ENCODE measurements at regions of chr17 and their contacts with region 1.

Region 1: DNA sequence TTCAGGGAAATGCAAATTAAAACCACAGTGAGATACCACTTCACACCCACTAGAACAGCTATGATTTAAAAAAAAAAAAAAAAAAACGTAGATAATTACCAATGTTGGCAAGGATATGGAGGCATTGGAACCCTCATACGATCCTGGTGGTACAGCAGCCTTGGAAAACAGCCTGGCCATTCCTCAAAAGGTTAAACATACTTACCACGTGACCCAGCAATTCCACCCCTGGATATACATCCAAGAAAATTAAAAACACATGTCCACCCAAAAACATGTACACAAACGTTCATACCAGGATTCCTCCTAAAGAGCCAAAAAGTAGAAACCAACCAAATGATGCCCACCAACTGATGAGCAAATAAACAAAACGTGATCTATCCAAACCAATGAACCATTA is 68.1 kb downstream of the GAS7 start:
- DNase-seq: no peak
- H3K4me3 ChIP-seq: no peak overlapping the region
- H3K27ac ChIP-seq: no peak overlapping the region
- H3K4me1 ChIP-seq: peaks cover 15% of the 10 kb centered on the region
- H3K27me3 ChIP-seq: no peaks in the 10 kb centered on the region
- CTCF ChIP-seq: no peak
- EP300 ChIP-seq: no peak
- POLR2A ChIP-seq: no peak

Region 2: GRCh38 chr17:9937241-9937761 is 193.0 kb before region 1 on chr17:
- intact Hi-C with region 1: loop called in 1 of 4 experiments (anchors 5 kb)
- DNase-seq: peak in 4 of 5 donors; percentile 50 to 82 (median 62)
- H3K4me3 ChIP-seq: no peak overlapping the region
- H3K27ac ChIP-seq: no peak overlapping the region
- H3K4me1 ChIP-seq: peaks cover 4% of the 10 kb centered on the region
- H3K27me3 ChIP-seq: no peaks in the 10 kb centered on the region
- CTCF ChIP-seq: no peak
- EP300 ChIP-seq: no peak
- POLR2A ChIP-seq: no peak

Region 3: GRCh38 chr17:10050597-10051101 is 79.6 kb before region 1 on chr17:
- intact Hi-C with region 1: no loop called
- DNase-seq: no peak
- H3K4me3 ChIP-seq: no peak overlapping the region
- H3K27ac ChIP-seq: no peak overlapping the region
- H3K4me1 ChIP-seq: no peaks in the 10 kb centered on the region
- H3K27me3 ChIP-seq: no peaks in the 10 kb centered on the region
- CTCF ChIP-seq: no peak
- EP300 ChIP-seq: no peak
- POLR2A ChIP-seq: no peak

Region 4: DNA sequence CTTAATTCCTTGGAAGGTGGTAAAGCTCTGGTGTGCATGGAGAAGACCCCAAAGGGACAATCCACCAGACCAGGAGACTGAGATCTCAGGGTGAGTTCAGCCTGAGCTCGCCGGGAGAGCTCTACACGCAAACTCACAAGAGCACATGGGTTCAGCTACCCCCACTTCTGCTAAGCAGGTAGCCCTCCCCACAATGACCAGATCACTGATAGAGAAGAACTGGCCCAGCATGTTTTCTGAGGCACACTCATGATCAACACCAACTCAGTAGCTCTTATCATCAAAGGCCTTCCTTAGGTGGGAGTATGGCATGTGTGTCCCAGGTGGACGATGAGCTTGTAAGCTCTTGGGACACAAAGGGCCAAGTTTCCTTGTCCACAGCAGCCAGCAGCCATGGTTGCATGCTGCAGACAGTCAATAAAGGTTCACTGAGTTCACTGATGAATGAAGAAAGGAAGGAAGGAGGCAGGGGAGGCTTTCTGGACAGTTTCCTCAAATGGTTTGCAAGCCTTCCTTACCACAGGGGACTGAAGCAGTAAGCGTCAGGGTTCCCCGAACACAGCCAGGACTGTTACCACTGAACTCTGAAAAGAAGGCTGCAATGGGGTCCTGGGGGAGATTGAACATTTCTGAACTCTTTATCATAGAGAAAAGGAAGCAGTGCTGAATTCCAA is 43.0 kb before region 1 on chr17:
- intact Hi-C with region 1: no loop called
- DNase-seq: no peak
- H3K4me3 ChIP-seq: no peak overlapping the region
- H3K27ac ChIP-seq: no peak overlapping the region
- H3K4me1 ChIP-seq: peaks cover 2% of the 10 kb centered on the region
- H3K27me3 ChIP-seq: no peaks in the 10 kb centered on the region
- CTCF ChIP-seq: no peak
- EP300 ChIP-seq: no peak
- POLR2A ChIP-seq: no peak

Measured in ovary (tissue), 10 donors.